HEK293 (cell line): ENCODE measurements at regions of chr6 and their contacts with region 1.

Region 1: DNA sequence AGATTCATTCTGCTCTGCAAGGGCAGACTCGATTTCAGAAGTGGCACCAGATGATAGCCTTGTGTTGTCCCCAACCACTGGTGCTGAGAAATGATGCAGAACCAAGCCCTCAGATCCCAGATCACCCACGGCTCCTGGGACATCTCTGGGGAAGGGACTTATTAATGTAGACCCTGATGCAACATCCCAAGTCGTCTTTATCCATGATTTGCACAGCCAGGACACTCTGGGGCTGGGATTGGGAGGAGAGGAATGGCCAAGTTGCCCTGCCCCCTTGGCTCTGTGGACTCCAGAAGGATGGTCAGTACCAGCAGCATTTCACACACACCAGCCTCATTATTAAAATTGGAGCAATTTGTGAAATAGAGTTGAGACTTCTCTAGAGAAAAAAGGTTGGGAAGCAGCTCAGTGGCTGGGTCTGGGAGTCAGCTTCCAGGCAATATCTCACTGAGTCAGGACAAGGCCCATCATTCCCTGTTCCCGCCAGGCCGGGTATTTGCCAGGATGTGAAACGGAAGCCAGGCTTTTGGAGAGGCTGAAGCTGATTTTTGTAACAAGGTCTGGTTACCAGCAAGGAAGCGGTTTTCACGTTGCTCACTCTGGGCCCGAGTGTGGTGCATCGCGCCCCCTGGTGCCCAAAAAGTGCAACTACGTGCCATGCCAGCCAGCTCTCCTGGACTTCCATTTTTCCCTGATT is 67.4 kb downstream of the ZBTB2 start:
- H3K4me3 ChIP-seq: no peak overlapping the region
- H3K27ac ChIP-seq: no peak overlapping the region
- H3K4me1 ChIP-seq: no peaks in the 10 kb centered on the region
- CTCF ChIP-seq: peak; percentile 91

Region 2: GRCh38 chr6:150881911-150882481 is 441.9 kb before region 1 on chr6:
- CTCF ChIA-PET with region 1: interaction called, 283 read pairs
- POLR2A ChIA-PET with region 1: no interaction called
- H3K4me3 ChIP-seq: no peak overlapping the region
- H3K27ac ChIP-seq: peak overlapping the region; percentile 4
- H3K4me1 ChIP-seq: peaks cover 6% of the 10 kb centered on the region
- CTCF ChIP-seq: no peak

Region 3: GRCh38 chr6:151014404-151015100 is 309.4 kb before region 1 on chr6:
- CTCF ChIA-PET with region 1: interaction called, 512 read pairs
- POLR2A ChIA-PET with region 1: interaction called, 25 read pairs
- H3K4me3 ChIP-seq: no peak overlapping the region
- H3K27ac ChIP-seq: no peak overlapping the region
- H3K4me1 ChIP-seq: no peaks in the 10 kb centered on the region
- CTCF ChIP-seq: peak; percentile 68

Region 4: GRCh38 chr6:151103266-151103665 is 220.7 kb before region 1 on chr6:
- CTCF ChIA-PET with region 1: interaction called, 14 read pairs
- POLR2A ChIA-PET with region 1: no interaction called
- H3K4me3 ChIP-seq: no peak overlapping the region
- H3K27ac ChIP-seq: no peak overlapping the region
- H3K4me1 ChIP-seq: no peaks in the 10 kb centered on the region
- CTCF ChIP-seq: no peak

Region 5: GRCh38 chr6:151240036-151240685 is 83.8 kb before region 1 on chr6:
- CTCF ChIA-PET with region 1: interaction called, 34 read pairs
- POLR2A ChIA-PET with region 1: interaction called, 7 read pairs
- H3K4me3 ChIP-seq: peak overlapping the region; percentile 67
- H3K27ac ChIP-seq: peak overlapping the region; percentile 64; the same call in 1 of the 2 replicates
- H3K4me1 ChIP-seq: peaks cover 9% of the 10 kb centered on the region; the same call in 1 of the 2 replicates
- CTCF ChIP-seq: peak; percentile 65

Region 6: DNA sequence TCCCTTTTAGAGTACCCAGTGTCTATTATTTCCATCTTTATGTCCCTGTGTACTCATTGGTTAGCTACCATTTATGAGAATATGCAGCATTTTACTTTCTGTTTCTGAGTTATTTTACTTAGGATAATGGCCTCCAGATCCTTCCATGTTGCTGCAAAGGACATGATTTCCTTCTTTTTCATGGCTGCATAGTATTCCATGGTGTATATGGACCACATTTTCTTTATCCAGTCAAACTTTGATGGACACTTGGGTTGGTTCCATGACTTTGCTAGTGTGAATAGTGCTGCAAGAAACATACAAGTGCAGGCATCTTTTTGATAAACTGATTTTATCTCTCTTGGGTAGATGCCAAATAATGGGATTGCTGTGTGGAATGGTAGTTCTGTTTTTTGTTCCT is 12.0 kb after region 1 on chr6:
- CTCF ChIA-PET with region 1: interaction called, 63 read pairs
- POLR2A ChIA-PET with region 1: interaction called, 7 read pairs
- H3K4me3 ChIP-seq: no peak overlapping the region
- H3K27ac ChIP-seq: no peak overlapping the region
- H3K4me1 ChIP-seq: no peaks in the 10 kb centered on the region
- CTCF ChIP-seq: no peak

Region 7: DNA sequence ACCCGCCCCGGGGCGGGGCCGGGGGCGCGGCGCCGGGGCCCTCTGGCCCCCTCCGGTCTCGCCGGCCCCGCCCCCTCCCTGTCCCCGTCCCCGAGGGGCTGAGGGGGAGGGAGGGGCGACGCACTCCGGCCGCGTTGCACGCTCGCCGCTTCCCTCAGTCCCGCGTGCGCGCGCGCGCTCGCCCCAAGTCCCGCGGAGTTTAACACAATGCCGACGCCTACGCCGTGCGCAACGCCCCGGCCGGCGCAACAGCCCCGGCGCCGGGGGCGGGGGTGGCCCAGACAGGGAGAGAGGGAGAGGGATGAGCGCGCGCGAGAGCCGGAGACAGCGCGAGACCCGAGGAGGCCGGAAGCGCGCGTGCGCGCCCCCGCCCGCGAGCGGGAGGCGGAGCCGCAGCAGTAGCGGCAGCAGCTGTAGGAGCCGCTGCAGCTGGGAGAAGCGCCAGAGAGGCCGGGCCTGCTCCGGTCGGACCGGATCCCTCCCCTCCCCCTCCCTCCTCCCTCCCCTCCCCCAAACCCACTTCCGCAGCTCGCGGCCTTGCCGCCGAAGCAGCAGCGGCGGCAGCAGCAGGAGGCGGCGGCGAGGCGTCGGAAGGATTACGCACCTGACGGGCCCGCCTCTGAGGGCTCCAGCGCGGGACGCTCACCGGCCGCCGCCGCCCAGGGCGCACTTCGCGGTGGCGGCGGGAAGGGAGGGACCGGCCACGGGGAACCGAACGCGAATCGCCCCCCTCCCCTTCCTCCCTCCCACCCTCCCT is 66.5 kb after region 1 on chr6:
- CTCF ChIA-PET with region 1: interaction called, 3 read pairs
- POLR2A ChIA-PET with region 1: interaction called, 10 read pairs
- H3K4me3 ChIP-seq: peak overlapping the region; percentile 97
- H3K27ac ChIP-seq: peak overlapping the region; percentile 100
- H3K4me1 ChIP-seq: peaks cover 6% of the 10 kb centered on the region
- CTCF ChIP-seq: peak; percentile 7; the same call in 1 of the 2 replicates